B cell (primary cell): ENCODE measurements at regions of chr12 and their contacts with region 1.

Region 1: GRCh38 chr12:113092607-113093408 is 36.3 kb downstream of the DTX1 start:
- DNase-seq: peak; percentile 72
- ATAC-seq: peak; percentile 69
- H3K4me3 ChIP-seq: peak overlapping the region in 3 of 5 experiments; percentile 5 to 58 (median 38)
- H3K4me3 Mint-ChIP-seq: peak overlapping the region; percentile 74
- H3K27ac ChIP-seq: peak overlapping the region; percentile 56 to 62
- H3K27ac Mint-ChIP-seq: peak overlapping the region; percentile 68
- H3K4me1 ChIP-seq: peaks cover 54 to 61% of the 10 kb centered on the region in 2 donors
- H3K4me1 Mint-ChIP-seq: peaks cover 58% of the 10 kb centered on the region
- H3K27me3 ChIP-seq: no peaks in the 10 kb centered on the region
- H3K27me3 Mint-ChIP-seq: no peaks in the 10 kb centered on the region
- CTCF ChIP-seq: peak; percentile 36

Region 2: GRCh38 chr12:113065126-113066007 is 27.4 kb before region 1 on chr12:
- CTCF ChIA-PET with region 1: interaction called, 28 read pairs
- POLR2A ChIA-PET with region 1: interaction called, 4 read pairs
- intact Hi-C with region 1: no loop called
- DNase-seq: peak; percentile 68
- ATAC-seq: peak; percentile 32
- H3K4me3 ChIP-seq: peak overlapping the region in 2 of 5 experiments; percentile 7 to 13
- H3K4me3 Mint-ChIP-seq: peak overlapping the region; percentile 65
- H3K27ac ChIP-seq: peak overlapping the region; percentile 25 to 84
- H3K27ac Mint-ChIP-seq: peak overlapping the region; percentile 67
- H3K4me1 ChIP-seq: peaks cover 100% of the 10 kb centered on the region in 2 donors
- H3K4me1 Mint-ChIP-seq: peaks cover 80% of the 10 kb centered on the region
- H3K27me3 ChIP-seq: no peaks in the 10 kb centered on the region
- H3K27me3 Mint-ChIP-seq: no peaks in the 10 kb centered on the region
- CTCF ChIP-seq: no peak

Region 3: GRCh38 chr12:113120670-113121370 is 28.0 kb after region 1 on chr12:
- CTCF ChIA-PET with region 1: no interaction called
- POLR2A ChIA-PET with region 1: no interaction called
- intact Hi-C with region 1: no loop called
- DNase-seq: no peak
- ATAC-seq: no peak
- H3K4me3 ChIP-seq: no peak overlapping the region
- H3K4me3 Mint-ChIP-seq: no peak overlapping the region
- H3K27ac ChIP-seq: no peak overlapping the region
- H3K27ac Mint-ChIP-seq: no peak overlapping the region
- H3K4me1 ChIP-seq: no peaks in the 10 kb centered on the region
- H3K4me1 Mint-ChIP-seq: no peaks in the 10 kb centered on the region
- H3K27me3 ChIP-seq: no peaks in the 10 kb centered on the region
- H3K27me3 Mint-ChIP-seq: peaks cover 7% of the 10 kb centered on the region
- CTCF ChIP-seq: no peak

Region 4: GRCh38 chr12:113135178-113136127 is 42.6 kb after region 1 on chr12 and contains the start of gene RASAL1:
- CTCF ChIA-PET with region 1: interaction called, 4 read pairs
- POLR2A ChIA-PET with region 1: interaction called, 3 read pairs
- intact Hi-C with region 1: loop called (anchors 5 kb)
- DNase-seq: peak; percentile 74
- ATAC-seq: peak; percentile 80
- H3K4me3 ChIP-seq: peak within 1 kb of the TSS in 4 of 5 experiments; percentile 24 to 46 (median 32)
- H3K4me3 Mint-ChIP-seq: peak within 1 kb of the TSS; percentile 84
- H3K27ac ChIP-seq: no peak within 1 kb of the TSS
- H3K27ac Mint-ChIP-seq: peak within 1 kb of the TSS; percentile 85
- H3K4me1 ChIP-seq: peaks cover 16 to 25% of the 10 kb centered on the region in 2 donors
- H3K4me1 Mint-ChIP-seq: peaks cover 26% of the 10 kb centered on the region
- H3K27me3 ChIP-seq: peaks cover 0 to 21% (median 6%) of the 10 kb centered on the region in 4 experiments
- H3K27me3 Mint-ChIP-seq: peaks cover 6% of the 10 kb centered on the region
- CTCF ChIP-seq: peak; percentile 70
- total RNA-seq, gene RASAL1: 11.0 and 13.9 TPM in 2 replicates

Region 5: DNA sequence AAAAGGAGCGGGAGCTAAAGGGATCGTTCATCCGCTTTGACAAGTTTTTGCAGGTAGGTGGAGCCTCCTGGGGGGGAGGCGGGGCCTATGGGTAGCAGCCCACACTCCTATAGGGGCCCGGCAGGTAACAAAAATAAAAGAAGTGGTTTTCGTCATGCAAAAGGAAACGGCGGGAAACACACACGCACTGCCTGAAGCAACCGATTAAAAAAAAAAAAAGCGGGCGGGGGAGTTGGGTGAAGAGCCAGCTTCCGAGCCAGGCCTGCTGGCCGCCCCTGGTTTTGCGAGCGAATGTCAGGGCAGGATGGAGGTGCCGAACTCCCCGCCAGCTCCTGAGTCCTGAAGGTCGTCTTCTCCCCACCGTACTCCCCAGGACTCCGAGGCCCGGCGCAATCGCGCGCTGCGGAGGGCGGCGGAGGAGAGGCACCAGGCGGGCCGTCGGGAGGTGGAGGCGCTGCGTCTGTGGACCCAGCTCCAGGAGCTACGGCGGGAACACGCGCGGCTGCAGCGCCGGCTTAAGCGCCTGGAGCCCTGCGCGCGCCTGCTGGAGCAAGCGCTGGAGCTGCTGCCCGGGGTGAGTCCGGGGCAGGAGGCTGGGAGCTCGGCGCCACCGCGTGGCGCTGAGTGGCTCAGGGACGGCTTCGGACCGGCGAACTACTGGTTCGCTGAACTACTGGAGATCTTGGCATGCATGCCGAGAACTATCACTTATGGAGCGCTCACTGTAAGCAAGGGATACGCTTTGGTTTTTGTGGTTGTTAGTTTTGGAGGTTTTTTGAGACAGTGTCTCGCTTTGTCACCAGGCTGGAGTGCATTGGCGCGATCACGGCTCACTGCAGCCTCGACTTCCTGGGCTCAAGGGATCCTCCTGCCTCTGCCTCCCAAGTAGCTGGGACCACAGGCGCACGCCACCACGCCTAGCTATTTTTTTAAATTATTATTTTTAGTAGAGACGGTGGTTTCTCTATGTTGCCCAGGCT is 60.3 kb after region 1 on chr12:
- CTCF ChIA-PET with region 1: interaction called, 17 read pairs
- POLR2A ChIA-PET with region 1: interaction called, 3 read pairs
- intact Hi-C with region 1: loop called (anchors 5 kb)
- DNase-seq: peak; percentile 72
- ATAC-seq: peak; percentile 73
- H3K4me3 ChIP-seq: peak overlapping the region; percentile 34 to 61 (median 56)
- H3K4me3 Mint-ChIP-seq: peak overlapping the region; percentile 88
- H3K27ac ChIP-seq: no peak overlapping the region
- H3K27ac Mint-ChIP-seq: no peak overlapping the region
- H3K4me1 ChIP-seq: peaks cover 15 to 32% of the 10 kb centered on the region in 2 donors
- H3K4me1 Mint-ChIP-seq: peaks cover 26% of the 10 kb centered on the region
- H3K27me3 ChIP-seq: peaks cover 0 to 25% (median 8%) of the 10 kb centered on the region in 4 experiments
- H3K27me3 Mint-ChIP-seq: peaks cover 6% of the 10 kb centered on the region
- CTCF ChIP-seq: peak; percentile 23